ENCODE measurements at regions of chr15 and their contacts with region 1.

Region 1: GRCh38 chr15:60358935-60359682 is 38.7 kb downstream of the ANXA2 start:
- DNase-seq: no peak
- H3K4me3 ChIP-seq: no peak overlapping the region
- H3K27ac ChIP-seq: no peak overlapping the region
- H3K4me1 ChIP-seq: peaks cover 16% of the 10 kb centered on the region
- H3K27me3 ChIP-seq: no peaks in the 10 kb centered on the region
- CTCF ChIP-seq: no peak

Region 2: DNA sequence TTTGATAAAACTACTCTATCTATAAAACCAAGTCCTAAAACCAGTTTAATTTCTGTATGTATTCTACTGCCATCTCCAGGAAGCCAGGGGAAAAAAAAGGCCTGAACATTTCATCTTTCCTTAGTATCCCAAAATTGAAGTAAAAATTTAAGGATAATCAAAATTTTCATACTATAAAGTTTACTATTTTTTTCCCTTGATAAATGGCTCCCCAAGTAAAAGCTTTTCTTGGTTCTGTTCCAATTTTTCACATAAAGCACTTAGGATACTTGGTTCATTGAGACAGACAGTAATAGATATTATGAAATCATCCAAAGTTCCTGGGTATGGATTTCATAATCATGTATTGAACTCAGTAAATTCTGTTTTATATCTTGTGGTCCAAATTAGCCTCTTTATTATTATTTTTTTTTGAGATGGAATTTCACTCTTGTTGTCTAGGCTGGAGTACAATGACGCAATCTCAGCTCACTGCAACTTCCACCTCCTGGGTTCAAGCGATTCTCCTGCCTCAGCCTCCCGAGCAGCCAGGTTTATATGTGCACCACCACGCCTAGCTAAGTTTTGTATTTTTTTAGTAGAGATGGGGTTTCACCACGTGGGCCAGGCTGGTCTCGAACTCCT is 85.3 kb after region 1 on chr15:
- CTCF ChIA-PET with region 1: interaction called, 4 read pairs
- POLR2A ChIA-PET with region 1: no interaction called
- intact Hi-C with region 1: loop called (anchors 2 kb)
- DNase-seq: peak; percentile 46
- H3K4me3 ChIP-seq: no peak overlapping the region
- H3K27ac ChIP-seq: no peak overlapping the region
- H3K4me1 ChIP-seq: peaks cover 14% of the 10 kb centered on the region
- H3K27me3 ChIP-seq: no peaks in the 10 kb centered on the region
- CTCF ChIP-seq: peak; percentile 66

Region 3: GRCh38 chr15:60507596-60508424 is 148.7 kb after region 1 on chr15:
- CTCF ChIA-PET with region 1: no interaction called
- POLR2A ChIA-PET with region 1: interaction called, 7 read pairs
- intact Hi-C with region 1: loop called (anchors 2 kb)
- DNase-seq: peak; percentile 66
- H3K4me3 ChIP-seq: no peak overlapping the region
- H3K27ac ChIP-seq: no peak overlapping the region
- H3K4me1 ChIP-seq: no peaks in the 10 kb centered on the region
- H3K27me3 ChIP-seq: no peaks in the 10 kb centered on the region
- CTCF ChIP-seq: peak; percentile 94

Region 4: DNA sequence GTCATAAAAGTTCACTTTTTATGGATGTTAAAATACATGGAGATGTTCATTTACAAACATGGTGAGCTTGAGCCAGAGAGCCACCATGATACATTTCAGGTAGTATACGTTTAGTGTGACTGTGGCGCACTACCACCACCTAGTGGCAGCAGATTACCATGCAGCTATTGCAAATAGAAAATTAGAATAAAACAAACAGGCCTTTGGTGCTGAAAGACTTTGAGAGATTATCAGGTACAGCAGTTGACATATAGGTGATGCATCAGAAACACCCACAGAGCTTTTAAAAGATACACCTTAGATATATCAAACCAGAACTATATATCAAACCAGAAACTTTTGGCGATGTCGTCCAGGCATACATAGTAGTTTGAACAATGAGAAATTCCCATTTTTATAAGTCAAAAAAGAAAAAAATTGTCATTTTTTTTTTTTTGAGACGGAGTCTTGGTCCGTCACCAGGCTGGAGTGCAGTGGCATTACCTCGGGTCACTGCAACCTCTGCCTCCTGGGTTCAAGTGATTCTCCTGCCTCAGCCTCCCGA is 161.8 kb after region 1 on chr15:
- CTCF ChIA-PET with region 1: interaction called, 6 read pairs
- POLR2A ChIA-PET with region 1: no interaction called
- intact Hi-C with region 1: loop called (anchors 2 kb)
- DNase-seq: peak; percentile 78
- H3K4me3 ChIP-seq: no peak overlapping the region
- H3K27ac ChIP-seq: no peak overlapping the region
- H3K4me1 ChIP-seq: no peaks in the 10 kb centered on the region
- H3K27me3 ChIP-seq: no peaks in the 10 kb centered on the region
- CTCF ChIP-seq: peak; percentile 94